GM12878 (cell line): ENCODE measurements at regions of chr12 and their contacts with region 1.

Region 1: GRCh38 chr12:53200458-53201176 is 6.4 kb downstream of the ITGB7 start:
- DNase-seq: peak; percentile 79
- ATAC-seq: peak; percentile 61
- H3K4me3 ChIP-seq: peak overlapping the region; percentile 90
- H3K27ac ChIP-seq: peak overlapping the region; percentile 69
- H3K4me1 ChIP-seq: peaks cover 47% of the 10 kb centered on the region
- H3K27me3 ChIP-seq: no peaks in the 10 kb centered on the region
- CTCF ChIP-seq: no peak
- EP300 ChIP-seq: peak; percentile 76 to 87
- POLR2A ChIP-seq: no peak
- RAD21 ChIP-seq: no peak

Region 2: DNA sequence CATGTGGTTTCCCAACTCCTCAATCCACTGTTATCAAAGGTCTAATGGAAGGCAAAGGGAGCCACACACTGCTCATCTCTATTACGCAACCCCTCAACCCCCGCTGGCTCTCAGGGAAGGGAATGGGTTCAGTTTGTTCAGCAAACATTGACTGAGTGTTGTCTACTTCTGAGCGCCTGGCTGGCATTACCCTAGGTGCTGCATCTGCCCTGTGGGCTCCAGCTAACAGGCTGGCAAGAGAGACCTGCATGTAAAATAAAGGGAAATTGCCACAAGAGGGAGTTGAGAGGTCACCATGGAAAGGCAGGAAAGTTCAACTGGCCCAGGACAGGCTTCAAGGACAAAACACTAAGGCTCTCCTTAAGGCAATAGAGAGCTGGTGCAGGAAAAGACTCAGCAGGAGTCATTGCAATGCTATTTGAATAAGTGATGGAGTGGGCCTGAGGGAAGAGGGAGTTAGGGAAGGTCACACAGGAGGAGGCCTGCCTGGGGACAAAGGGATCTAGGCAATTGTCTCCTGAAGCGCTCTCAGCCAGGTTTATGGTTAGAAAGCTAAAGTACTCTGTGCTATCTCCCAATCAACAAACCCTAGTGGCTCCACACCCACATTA is 25.6 kb before region 1 on chr12:
- CTCF ChIA-PET with region 1: interaction called, 22 read pairs
- POLR2A ChIA-PET with region 1: interaction called, 48 read pairs
- RAD21 ChIA-PET with region 1: interaction called, 22 read pairs
- SMC1A ChIA-PET with region 1: interaction called, 36 read pairs
- in situ Hi-C with region 1: no loop called
- intact Hi-C with region 1: loop called (anchors 2 kb)
- DNase-seq: no peak
- ATAC-seq: peak; percentile 48
- H3K4me3 ChIP-seq: no peak overlapping the region
- H3K27ac ChIP-seq: no peak overlapping the region
- H3K4me1 ChIP-seq: peaks cover 14% of the 10 kb centered on the region; the same call in 1 of the 2 replicates
- H3K27me3 ChIP-seq: no peaks in the 10 kb centered on the region
- CTCF ChIP-seq: peak in 2 of 3 experiments; percentile 19 to 33; a peak in 2 of 6 replicates
- EP300 ChIP-seq: no peak
- POLR2A ChIP-seq: no peak
- RAD21 ChIP-seq: peak; percentile 42

Region 3: GRCh38 chr12:53180220-53180930 is 20.2 kb before region 1 on chr12 and contains the starts of genes CSAD and ZNF740:
- CTCF ChIA-PET with region 1: interaction called, 22 read pairs
- POLR2A ChIA-PET with region 1: interaction called, 48 read pairs
- RAD21 ChIA-PET with region 1: interaction called, 22 read pairs
- SMC1A ChIA-PET with region 1: interaction called, 36 read pairs
- in situ Hi-C with region 1: no loop called
- intact Hi-C with region 1: loop called (anchors 2 kb)
- DNase-seq: peak; percentile 91
- ATAC-seq: peak; percentile 96
- H3K4me3 ChIP-seq: peak within 1 kb of the TSS; percentile 78
- H3K27ac ChIP-seq: peak within 1 kb of the TSS; percentile 91
- H3K4me1 ChIP-seq: peaks cover 13% of the 10 kb centered on the region; the same call in 1 of the 2 replicates
- H3K27me3 ChIP-seq: no peaks in the 10 kb centered on the region
- CTCF ChIP-seq: peak in 2 of 3 experiments; percentile 2 to 12; a peak in 1 of 6 replicates
- EP300 ChIP-seq: no peak
- POLR2A ChIP-seq: peak; percentile 81
- RAD21 ChIP-seq: no peak
- polyA plus RNA-seq, gene CSAD: 1.2 to 2.0 TPM
- polyA plus RNA-seq, gene ZNF740: 1.4 to 1.8 TPM

Region 4: GRCh38 chr12:53190108-53190729 is 10.4 kb before region 1 on chr12:
- CTCF ChIA-PET with region 1: interaction called, 50 read pairs
- POLR2A ChIA-PET with region 1: interaction called, 6 read pairs
- RAD21 ChIA-PET with region 1: interaction called, 4 read pairs
- SMC1A ChIA-PET with region 1: interaction called, 10 read pairs
- in situ Hi-C with region 1: no loop called
- intact Hi-C with region 1: no loop called
- DNase-seq: no peak
- ATAC-seq: peak; percentile 90
- H3K4me3 ChIP-seq: no peak overlapping the region
- H3K27ac ChIP-seq: no peak overlapping the region
- H3K4me1 ChIP-seq: no peaks in the 10 kb centered on the region
- H3K27me3 ChIP-seq: no peaks in the 10 kb centered on the region
- CTCF ChIP-seq: peak; percentile 52 to 87 (median 74)
- EP300 ChIP-seq: no peak
- POLR2A ChIP-seq: peak; percentile 66
- RAD21 ChIP-seq: peak; percentile 59